ENCODE measurements at regions of chr11 and their contacts with region 1.

Region 1: DNA sequence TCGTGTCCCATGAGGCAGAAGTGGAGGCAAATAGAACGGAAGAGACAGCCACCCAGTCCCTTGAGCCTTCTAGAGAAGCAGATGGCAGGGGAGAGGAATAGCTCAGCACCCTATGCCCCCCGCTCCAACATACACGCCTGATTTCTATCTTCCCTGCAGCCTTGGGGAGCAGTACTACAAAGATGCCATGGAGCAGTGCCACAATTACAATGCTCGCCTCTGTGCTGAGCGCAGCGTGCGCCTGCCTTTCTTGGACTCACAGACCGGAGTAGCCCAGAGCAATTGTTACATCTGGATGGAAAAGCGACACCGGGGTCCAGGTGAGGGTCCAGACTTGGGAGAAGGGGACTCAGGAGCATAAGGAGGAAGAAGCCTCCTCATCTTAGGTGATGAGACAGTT is 6.6 kb downstream of the DPF2 start:
- DNase-seq: no peak
- H3K4me3 ChIP-seq: no peak overlapping the region
- H3K27ac ChIP-seq: no peak overlapping the region
- H3K4me1 ChIP-seq: no peaks in the 10 kb centered on the region
- H3K27me3 ChIP-seq: no peaks in the 10 kb centered on the region
- CTCF ChIP-seq: no peak
- EP300 ChIP-seq: no peak
- POLR2A ChIP-seq: no peak
- RAD21 ChIP-seq: no peak

Region 2: GRCh38 chr11:65329944-65330403 is 10.3 kb before region 1 on chr11:
- CTCF ChIA-PET with region 1: interaction called, 13 read pairs
- POLR2A ChIA-PET with region 1: interaction called, 18 read pairs
- DNase-seq: peak in 1 of 2 experiments; percentile 91
- H3K4me3 ChIP-seq: no peak overlapping the region
- H3K27ac ChIP-seq: no peak overlapping the region
- H3K4me1 ChIP-seq: peaks cover 0 to 4% (median 2%) of the 10 kb centered on the region in 4 experiments; a peak in 3 of 7 replicates
- H3K27me3 ChIP-seq: no peaks in the 10 kb centered on the region; a peak in 1 of 7 replicates
- CTCF ChIP-seq: peak; percentile 29 to 79 (median 77)
- EP300 ChIP-seq: no peak
- POLR2A ChIP-seq: no peak
- RAD21 ChIP-seq: peak; percentile 49 to 60

Region 3: GRCh38 chr11:65558002-65558931 is 218.0 kb after region 1 on chr11 and contains the start of gene LTBP3:
- CTCF ChIA-PET with region 1: no interaction called
- POLR2A ChIA-PET with region 1: no interaction called
- DNase-seq: peak in 1 of 2 experiments; percentile 72
- H3K4me3 ChIP-seq: peak within 1 kb of the TSS; percentile 39 to 77 (median 48)
- H3K27ac ChIP-seq: no peak within 1 kb of the TSS
- H3K4me1 ChIP-seq: peaks cover 0 to 51% (median 39%) of the 10 kb centered on the region in 4 experiments; a peak in 6 of 7 replicates
- H3K27me3 ChIP-seq: peaks cover 0 to 32% (median 21%) of the 10 kb centered on the region in 4 experiments; a peak in 5 of 7 replicates
- CTCF ChIP-seq: no peak
- EP300 ChIP-seq: no peak
- POLR2A ChIP-seq: no peak
- RAD21 ChIP-seq: no peak
- total RNA-seq, gene LTBP3: 12.8 and 15.3 TPM in 2 replicates